ENCODE measurements at regions of chr14 and their contacts with region 1.

Region 1: GRCh38 chr14:41973178-41973577 is 366.5 kb downstream of the LRFN5 start:
- DNase-seq: no peak
- ATAC-seq: no peak
- H3K4me3 ChIP-seq: no peak overlapping the region
- H3K27ac ChIP-seq: no peak overlapping the region
- H3K4me1 ChIP-seq: no peaks in the 10 kb centered on the region
- H3K27me3 ChIP-seq: no peaks in the 10 kb centered on the region
- CTCF ChIP-seq: no peak
- POLR2A ChIP-seq: no peak
- RAD21 ChIP-seq: no peak

Region 2: GRCh38 chr14:41993687-41994086 is 20.5 kb after region 1 on chr14:
- CTCF ChIA-PET with region 1: no interaction called
- POLR2A ChIA-PET with region 1: no interaction called
- dilution Hi-C with region 1: no loop called
- in situ Hi-C with region 1: no loop called
- intact Hi-C with region 1: loop called (anchors 1 kb)
- DNase-seq: no peak
- ATAC-seq: no peak
- H3K4me3 ChIP-seq: no peak overlapping the region
- H3K27ac ChIP-seq: no peak overlapping the region
- H3K4me1 ChIP-seq: no peaks in the 10 kb centered on the region
- H3K27me3 ChIP-seq: no peaks in the 10 kb centered on the region
- CTCF ChIP-seq: no peak
- POLR2A ChIP-seq: no peak
- RAD21 ChIP-seq: no peak